PC-9 (cell line): ENCODE measurements at regions of chr10 and their contacts with region 1.

Region 1: DNA sequence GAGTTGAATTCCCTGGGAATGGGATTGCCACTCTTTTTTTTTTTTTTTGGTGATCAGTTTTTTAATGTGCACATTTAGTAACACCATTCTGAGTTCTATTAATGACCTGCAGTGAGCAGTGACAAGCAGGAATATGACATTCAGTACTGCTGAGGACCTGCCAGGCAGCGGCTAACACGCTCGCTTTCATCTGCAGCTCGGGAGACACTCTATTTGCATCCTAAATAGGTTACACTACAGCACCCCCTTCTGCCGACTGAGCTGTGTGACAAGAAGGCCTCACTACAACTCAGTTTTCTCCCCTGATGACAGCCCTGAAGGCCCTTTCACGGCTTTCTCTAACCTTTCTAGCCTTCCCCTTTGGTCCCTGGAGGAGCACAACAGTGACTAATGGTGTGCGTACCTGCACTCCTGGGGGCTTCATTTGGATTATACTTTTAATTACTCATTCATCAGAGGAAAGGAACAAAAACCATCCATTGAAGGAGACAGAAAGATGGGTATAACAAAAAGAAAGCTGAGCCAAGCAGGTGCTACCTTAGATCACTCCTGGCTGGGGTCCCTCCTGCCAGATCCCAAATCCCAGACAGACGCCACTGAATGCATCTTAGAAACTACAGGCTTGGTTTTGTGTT is 872.4 kb downstream of the LRMDA start:
- DNase-seq: peak in 1 of 2 experiments; percentile 9
- H3K4me3 ChIP-seq: no peak overlapping the region
- H3K27ac ChIP-seq: no peak overlapping the region
- H3K4me1 ChIP-seq: no peaks in the 10 kb centered on the region
- H3K27me3 ChIP-seq: no peaks in the 10 kb centered on the region
- CTCF ChIP-seq: peak; percentile 58

Region 2: DNA sequence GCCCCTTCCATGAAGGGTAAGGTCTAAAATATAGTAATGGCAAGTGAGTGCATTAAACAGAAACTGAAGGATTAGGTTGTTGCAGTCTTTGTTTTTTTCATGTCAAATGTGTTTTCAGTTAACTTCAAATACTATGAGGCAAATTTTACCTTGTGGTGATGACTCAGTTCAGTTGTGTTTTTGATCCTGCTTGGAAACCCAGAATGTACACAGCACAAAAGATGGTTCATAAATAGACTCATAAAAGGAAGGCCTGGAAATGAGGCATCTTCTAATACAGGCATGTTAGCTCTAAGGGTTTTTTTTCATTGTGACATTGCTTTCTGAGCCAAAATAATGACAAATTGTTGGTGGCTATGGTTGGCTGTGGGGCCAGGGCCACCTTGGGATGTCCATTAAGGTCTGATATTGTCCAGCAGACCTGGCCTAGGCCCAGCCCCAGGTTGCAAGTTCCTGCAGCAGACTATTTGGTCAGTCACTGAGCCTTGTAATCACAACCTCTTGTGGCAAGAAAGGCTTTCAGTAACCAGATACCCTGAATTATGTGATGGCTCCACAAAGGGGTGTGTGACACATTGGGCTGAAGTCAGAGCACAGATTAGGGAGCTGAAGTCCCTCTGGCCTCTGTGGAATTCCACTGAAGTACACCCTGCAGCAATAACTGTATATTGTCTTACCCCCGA is 1261.4 kb before region 1 on chr10:
- CTCF ChIA-PET with region 1: interaction called, 11 read pairs
- POLR2A ChIA-PET with region 1: no interaction called
- intact Hi-C with region 1: no loop called
- DNase-seq: no peak
- H3K4me3 ChIP-seq: no peak overlapping the region
- H3K27ac ChIP-seq: no peak overlapping the region
- H3K4me1 ChIP-seq: no peaks in the 10 kb centered on the region
- H3K27me3 ChIP-seq: no peaks in the 10 kb centered on the region
- CTCF ChIP-seq: no peak

Region 3: GRCh38 chr10:76036111-76036940 is 267.5 kb before region 1 on chr10:
- CTCF ChIA-PET with region 1: no interaction called
- POLR2A ChIA-PET with region 1: no interaction called
- intact Hi-C with region 1: loop called (anchors 1 kb)
- DNase-seq: peak in 1 of 2 experiments; percentile 49
- H3K4me3 ChIP-seq: no peak overlapping the region
- H3K27ac ChIP-seq: no peak overlapping the region
- H3K4me1 ChIP-seq: no peaks in the 10 kb centered on the region
- H3K27me3 ChIP-seq: no peaks in the 10 kb centered on the region
- CTCF ChIP-seq: peak; percentile 91

Region 4: DNA sequence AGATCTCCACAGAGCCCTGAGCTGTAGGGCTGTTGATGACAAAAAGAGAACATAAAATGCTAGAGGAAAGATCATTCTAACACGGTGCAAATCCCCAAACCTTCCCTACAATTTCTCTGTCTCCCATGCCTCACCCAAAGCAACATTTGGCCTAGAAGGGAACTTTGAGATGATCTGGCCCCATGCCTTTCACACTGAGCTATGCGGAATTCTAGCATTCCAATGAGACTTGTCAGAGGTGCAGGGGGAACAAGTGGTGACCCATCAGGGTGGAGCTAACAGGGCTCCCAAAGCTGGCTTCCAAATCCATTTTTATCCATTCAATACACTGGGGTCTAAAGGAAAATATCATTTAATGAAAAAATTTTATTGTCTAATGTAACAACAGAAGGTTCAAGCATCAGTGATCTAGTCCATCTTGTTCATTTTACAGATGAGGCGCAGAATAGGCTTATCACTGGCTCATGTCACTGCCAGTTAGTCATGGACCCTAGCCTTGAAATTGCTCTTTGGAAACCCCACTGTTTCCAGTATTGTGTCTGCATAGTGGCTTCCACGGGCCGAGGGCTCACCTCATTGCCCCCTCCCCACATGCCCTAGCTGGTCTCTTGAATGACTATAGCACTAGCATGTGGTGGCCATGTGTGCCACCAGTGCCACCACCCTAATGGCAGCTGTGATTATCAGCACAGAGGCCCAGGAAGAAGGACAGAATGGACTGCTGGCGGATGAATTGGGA is 128.6 kb after region 1 on chr10:
- CTCF ChIA-PET with region 1: no interaction called
- POLR2A ChIA-PET with region 1: no interaction called
- intact Hi-C with region 1: no loop called
- DNase-seq: peak; percentile 60 to 79
- H3K4me3 ChIP-seq: peak overlapping the region; percentile 30; the same call in 1 of the 2 replicates
- H3K27ac ChIP-seq: peak overlapping the region; percentile 80
- H3K4me1 ChIP-seq: peaks cover 40% of the 10 kb centered on the region
- H3K27me3 ChIP-seq: no peaks in the 10 kb centered on the region
- CTCF ChIP-seq: no peak

Region 5: GRCh38 chr10:76547352-76547972 is 243.7 kb after region 1 on chr10:
- CTCF ChIA-PET with region 1: no interaction called
- POLR2A ChIA-PET with region 1: no interaction called
- intact Hi-C with region 1: loop called (anchors 5 kb)
- DNase-seq: peak; percentile 49 to 67
- H3K4me3 ChIP-seq: no peak overlapping the region
- H3K27ac ChIP-seq: no peak overlapping the region
- H3K4me1 ChIP-seq: no peaks in the 10 kb centered on the region
- H3K27me3 ChIP-seq: no peaks in the 10 kb centered on the region
- CTCF ChIP-seq: peak; percentile 90